Heart left ventricle (tissue), 16 donors: ENCODE measurements at regions of chrX and their contacts with region 1.

Region 1: DNA sequence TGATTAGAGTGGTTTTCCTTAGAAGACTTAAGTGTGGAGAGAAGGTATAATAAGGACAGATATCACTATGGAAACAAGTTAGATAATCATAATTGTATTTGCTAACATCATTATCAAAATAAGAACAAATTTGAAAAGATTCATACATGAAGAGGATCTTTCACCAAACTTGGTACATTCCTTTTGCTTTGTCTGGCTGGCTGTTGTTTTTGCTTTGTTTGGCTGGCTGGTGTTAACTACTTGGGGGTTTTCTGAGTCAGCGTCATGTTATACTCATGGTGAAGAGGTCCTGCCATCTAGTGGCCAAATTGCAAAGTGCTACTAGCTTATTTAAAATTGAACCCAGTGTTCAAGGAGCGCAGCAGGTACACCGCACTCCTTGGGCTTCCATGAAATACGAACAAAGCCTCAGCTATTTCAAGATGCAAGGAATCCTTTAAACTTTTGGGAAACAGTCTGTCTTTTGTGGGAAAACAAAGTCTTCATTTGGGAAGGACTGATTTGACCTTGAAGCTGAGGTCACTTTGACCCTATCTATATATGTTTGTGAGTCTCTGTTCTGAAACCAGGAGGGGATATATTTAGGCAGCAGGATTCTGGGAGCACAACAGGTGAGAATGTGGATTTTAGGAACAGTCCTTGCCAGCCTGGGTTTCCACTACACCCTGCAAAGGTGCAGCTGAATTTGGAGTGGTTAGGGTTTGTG is 129.7 kb downstream of the PLS3 start:
- DNase-seq: peak in 4 of 5 donors; percentile 20 to 47 (median 28)
- ATAC-seq: peak in 3 of 4 donors; percentile 69 to 81 (median 74)
- H3K4me3 ChIP-seq: peak overlapping the region in 1 of 12 donors; percentile 18
- H3K27ac ChIP-seq: peak overlapping the region in 6 of 12 donors; percentile 24 to 70 (median 48)
- H3K4me1 ChIP-seq: peaks cover 0 to 5% (median 0%) of the 10 kb centered on the region in 12 donors
- H3K27me3 ChIP-seq: peaks cover 0 to 22% (median 0%) of the 10 kb centered on the region in 9 donors
- CTCF ChIP-seq: peak; percentile 54 to 89 (median 69)
- POLR2A ChIP-seq: no peak

Region 2: DNA sequence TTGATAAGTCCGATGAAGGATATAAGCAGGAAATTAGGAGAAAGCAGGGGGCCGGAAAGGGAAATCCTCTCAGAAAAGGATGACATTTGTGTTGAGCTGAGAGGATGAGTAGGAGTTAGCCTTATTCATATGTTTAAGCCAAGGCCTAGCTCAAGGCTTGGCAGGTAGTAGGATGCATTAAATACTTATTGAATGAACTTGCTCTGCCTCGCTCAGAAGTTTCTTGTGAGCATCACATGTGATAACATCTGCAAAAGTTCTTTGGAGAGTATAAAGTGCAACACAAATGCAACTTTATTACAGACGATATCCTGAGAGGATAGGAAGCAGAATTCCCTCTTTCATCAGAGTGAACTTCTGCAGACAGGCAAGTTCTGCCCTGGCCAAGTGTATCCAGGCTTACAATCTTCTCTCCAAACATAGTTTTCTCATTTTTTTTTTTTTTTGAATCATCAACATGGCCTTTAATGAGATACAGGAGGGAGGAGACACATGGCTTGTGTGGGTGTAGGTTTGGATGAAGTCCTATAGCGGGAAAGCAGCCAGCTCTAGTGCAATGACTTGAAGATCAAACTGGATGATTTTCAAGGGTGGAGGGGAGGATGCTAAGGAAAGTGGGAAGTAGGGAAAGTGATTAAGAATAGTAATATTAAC is 353.0 kb before region 1 on chrX:
- intact Hi-C with region 1: loop called in 2 of 10 experiments (anchors 5 kb)
- DNase-seq: peak in 3 of 5 donors; percentile 10 to 32 (median 29)
- ATAC-seq: peak in 3 of 4 donors; percentile 32 to 42 (median 41)
- H3K4me3 ChIP-seq: no peak overlapping the region
- H3K27ac ChIP-seq: peak overlapping the region in 3 of 12 donors; percentile 17 to 31 (median 26)
- H3K4me1 ChIP-seq: peaks cover 0 to 5% (median 0%) of the 10 kb centered on the region in 12 donors
- H3K27me3 ChIP-seq: peaks cover 0 to 18% (median 0%) of the 10 kb centered on the region in 9 donors
- CTCF ChIP-seq: no peak
- POLR2A ChIP-seq: no peak

Region 3: GRCh38 chrX:115625572-115626301 is 64.9 kb before region 1 on chrX:
- intact Hi-C with region 1: loop called in 1 of 10 experiments (anchors 10 kb)
- DNase-seq: no peak
- ATAC-seq: peak in 2 of 4 donors; percentile 44 to 46
- H3K4me3 ChIP-seq: peak overlapping the region in 1 of 12 donors; percentile 7
- H3K27ac ChIP-seq: peak overlapping the region in 11 of 12 donors; percentile 23 to 73 (median 43)
- H3K4me1 ChIP-seq: peaks cover 0 to 56% (median 8%) of the 10 kb centered on the region in 12 donors
- H3K27me3 ChIP-seq: peaks cover 0 to 38% (median 0%) of the 10 kb centered on the region in 9 donors
- CTCF ChIP-seq: no peak
- POLR2A ChIP-seq: no peak

Region 4: GRCh38 chrX:115650916-115651315 is 39.7 kb before region 1 on chrX:
- intact Hi-C with region 1: loop called in 2 of 10 experiments (anchors 2 to 5 kb)
- DNase-seq: peak in 1 of 5 donors; percentile 29
- ATAC-seq: peak; percentile 15 to 72 (median 60)
- H3K4me3 ChIP-seq: no peak overlapping the region
- H3K27ac ChIP-seq: peak overlapping the region in 1 of 12 donors; percentile 41
- H3K4me1 ChIP-seq: peaks cover 0 to 19% (median 6%) of the 10 kb centered on the region in 12 donors
- H3K27me3 ChIP-seq: peaks cover 0 to 33% (median 0%) of the 10 kb centered on the region in 9 donors
- CTCF ChIP-seq: peak; percentile 20 to 66 (median 46)
- POLR2A ChIP-seq: no peak